Activated naive CD4-positive, alpha-beta T cell treated with anti-CD3 and anti-CD28 coated beads for 36 hours (primary cell): ENCODE measurements at regions of chr6 and their contacts with region 1.

Region 1: GRCh38 chr6:78896227-78896626 is 28.9 kb downstream of the IRAK1BP1 start:
- DNase-seq: no peak
- H3K4me3 Mint-ChIP-seq: no peak overlapping the region
- H3K27ac Mint-ChIP-seq: no peak overlapping the region
- H3K4me1 Mint-ChIP-seq: no peaks in the 10 kb centered on the region
- H3K27me3 Mint-ChIP-seq: no peaks in the 10 kb centered on the region

Region 2: DNA sequence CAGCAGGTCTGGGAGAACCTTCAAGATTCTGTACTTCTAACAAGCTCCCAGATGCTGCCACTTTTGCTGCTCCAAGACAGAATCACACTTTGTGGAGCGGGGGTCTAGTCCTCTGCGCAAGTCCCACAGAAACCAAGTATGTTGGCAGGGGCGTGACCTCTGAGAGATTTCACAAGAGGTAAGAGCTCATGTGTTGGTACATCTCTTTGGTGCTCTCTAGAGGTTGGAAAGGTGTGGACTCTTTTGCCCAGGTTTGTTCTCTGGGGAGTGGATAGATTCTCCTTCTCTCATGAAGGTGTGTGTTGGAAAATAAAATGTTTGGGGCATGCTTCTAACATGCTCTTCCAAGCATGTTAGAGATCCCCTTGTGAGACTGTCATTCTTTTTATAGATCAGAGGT is 369.8 kb before region 1 on chr6:
- CTCF ChIA-PET with region 1: no interaction called
- intact Hi-C with region 1: no loop called
- DNase-seq: no peak
- H3K4me3 Mint-ChIP-seq: no peak overlapping the region
- H3K27ac Mint-ChIP-seq: no peak overlapping the region
- H3K4me1 Mint-ChIP-seq: no peaks in the 10 kb centered on the region
- H3K27me3 Mint-ChIP-seq: peaks cover 2% of the 10 kb centered on the region

Region 3: DNA sequence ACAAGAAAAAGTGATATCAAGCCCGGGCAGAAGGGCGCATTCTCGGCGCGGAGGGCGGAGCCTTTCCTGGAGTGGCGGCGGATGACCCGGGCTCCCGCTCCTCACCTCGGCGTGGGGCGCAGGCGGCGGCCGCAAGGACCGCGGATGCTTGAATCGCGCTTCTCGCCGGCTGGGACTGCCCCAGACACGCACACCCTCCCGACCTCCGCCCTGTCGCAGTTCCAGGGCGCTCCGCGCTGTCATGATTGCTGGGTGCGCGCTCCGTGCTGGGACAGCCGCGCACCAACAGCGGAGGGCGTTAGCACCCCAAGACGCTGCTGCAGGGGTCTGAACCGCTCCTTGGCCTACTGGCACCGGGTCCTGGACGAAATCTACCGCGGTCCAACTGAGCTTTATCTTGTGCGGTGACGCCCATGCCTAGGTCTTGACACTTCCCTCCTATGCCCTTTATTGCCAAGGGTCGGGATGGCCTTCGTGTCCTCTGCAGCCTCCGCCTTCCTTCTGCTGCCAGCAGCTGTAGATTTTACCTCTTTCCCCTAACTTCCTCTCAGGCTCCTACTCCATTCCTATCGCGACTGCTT is 14.5 kb after region 1 on chr6:
- CTCF ChIA-PET with region 1: no interaction called
- intact Hi-C with region 1: loop called (anchors 2 kb)
- DNase-seq: peak; percentile 38
- H3K4me3 Mint-ChIP-seq: peak overlapping the region; percentile 19
- H3K27ac Mint-ChIP-seq: no peak overlapping the region
- H3K4me1 Mint-ChIP-seq: peaks cover 13% of the 10 kb centered on the region
- H3K27me3 Mint-ChIP-seq: peaks cover 32% of the 10 kb centered on the region